Panc1 (cell line): ENCODE measurements at regions of chr1 and their contacts with region 1.

Region 1: DNA sequence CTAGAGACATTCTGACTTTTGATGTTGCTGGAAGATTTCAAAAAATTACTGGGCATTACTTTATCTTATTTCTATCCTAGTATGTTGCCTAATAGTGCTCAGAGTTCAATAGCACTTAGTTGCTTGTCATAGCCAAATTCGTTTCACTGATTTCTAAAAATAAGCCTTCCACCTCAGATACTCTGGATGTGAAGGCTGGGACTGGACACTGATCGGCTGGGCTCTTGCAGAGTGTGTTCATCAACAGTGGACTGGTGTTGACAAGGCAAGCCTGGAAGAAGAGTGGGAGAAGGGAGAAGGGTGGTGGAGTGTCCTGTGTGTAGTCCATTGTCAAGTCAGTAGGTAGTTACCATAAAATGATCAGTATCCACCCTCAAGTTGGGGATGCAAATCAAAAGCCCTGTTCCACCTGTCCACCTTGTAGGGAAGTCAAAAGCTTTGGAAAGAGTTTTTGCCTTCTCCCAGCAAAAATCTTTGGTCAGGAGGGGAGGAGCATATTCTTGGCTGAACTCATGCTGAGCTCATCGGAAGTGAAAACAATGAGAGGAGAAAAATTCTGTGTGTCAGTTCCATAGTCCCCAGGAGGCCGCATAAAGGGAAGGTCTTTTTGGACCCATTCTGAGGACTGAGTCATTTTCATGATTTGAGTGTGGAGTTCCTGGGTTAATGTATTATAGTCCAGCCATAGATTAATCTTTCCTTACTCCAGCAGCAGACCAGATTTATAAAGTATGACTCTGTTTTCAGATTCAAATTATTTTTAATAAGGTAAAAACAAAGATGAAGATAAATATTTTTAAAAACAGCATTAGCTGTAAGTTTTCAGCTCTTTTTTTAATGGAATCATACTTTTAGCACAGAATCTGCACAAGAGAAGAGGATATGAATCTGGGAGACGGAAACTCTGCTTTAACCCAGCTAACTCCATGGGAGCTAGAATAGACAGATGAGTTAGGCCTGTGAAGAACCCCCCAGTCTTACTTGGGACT is 99.5 kb upstream of the BMP8A start:
- DNase-seq: peak; percentile 82
- ATAC-seq: peak; percentile 67
- H3K4me3 ChIP-seq: no peak overlapping the region
- H3K27ac ChIP-seq: peak overlapping the region; percentile 94
- H3K4me1 ChIP-seq: peaks cover 66% of the 10 kb centered on the region
- H3K27me3 ChIP-seq: no peaks in the 10 kb centered on the region
- CTCF ChIP-seq: no peak

Region 2: DNA sequence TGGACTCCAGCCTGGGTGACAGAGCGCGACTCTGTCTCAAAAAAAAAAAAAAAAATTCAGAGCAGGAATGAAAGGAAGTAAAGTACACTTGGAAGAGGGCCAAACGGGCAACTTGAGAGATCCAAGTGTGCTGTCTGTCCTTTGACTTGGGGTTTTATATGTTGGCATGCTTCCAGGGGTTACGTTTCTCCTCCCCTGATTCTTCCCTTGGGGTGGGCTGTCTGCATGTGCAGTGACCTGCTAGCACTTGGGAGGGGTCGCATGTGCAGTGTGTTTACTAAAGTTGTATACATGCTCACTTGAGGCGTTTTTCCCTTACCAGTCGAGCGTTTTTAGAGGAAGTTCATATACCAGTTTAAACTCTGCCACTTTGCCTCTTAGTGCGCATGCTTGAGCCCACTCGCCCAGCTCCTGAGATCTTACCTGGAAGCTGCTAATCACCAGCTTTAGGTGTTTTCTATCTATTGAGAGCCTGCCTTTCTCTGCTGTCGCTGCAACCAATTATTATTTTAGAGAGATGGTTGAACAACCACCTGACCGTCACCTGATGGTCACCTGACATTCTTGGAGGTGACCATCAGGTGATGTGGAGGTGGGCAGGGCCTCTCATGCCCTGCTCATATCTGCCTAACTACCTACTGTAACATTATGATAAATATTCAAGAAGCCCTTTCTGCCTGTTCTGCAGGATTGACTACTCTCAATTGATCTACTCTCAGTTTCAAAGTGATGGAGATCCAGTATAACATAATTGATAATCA is 47.4 kb before region 1 on chr1:
- CTCF ChIA-PET with region 1: no interaction called
- POLR2A ChIA-PET with region 1: interaction called, 17 read pairs
- in situ Hi-C with region 1: no loop called
- intact Hi-C with region 1: no loop called
- DNase-seq: no peak
- ATAC-seq: no peak
- H3K4me3 ChIP-seq: no peak overlapping the region
- H3K27ac ChIP-seq: no peak overlapping the region
- H3K4me1 ChIP-seq: no peaks in the 10 kb centered on the region
- H3K27me3 ChIP-seq: no peaks in the 10 kb centered on the region
- CTCF ChIP-seq: no peak